ENCODE measurements at regions of chr19 and their contacts with region 1.

Region 1: DNA sequence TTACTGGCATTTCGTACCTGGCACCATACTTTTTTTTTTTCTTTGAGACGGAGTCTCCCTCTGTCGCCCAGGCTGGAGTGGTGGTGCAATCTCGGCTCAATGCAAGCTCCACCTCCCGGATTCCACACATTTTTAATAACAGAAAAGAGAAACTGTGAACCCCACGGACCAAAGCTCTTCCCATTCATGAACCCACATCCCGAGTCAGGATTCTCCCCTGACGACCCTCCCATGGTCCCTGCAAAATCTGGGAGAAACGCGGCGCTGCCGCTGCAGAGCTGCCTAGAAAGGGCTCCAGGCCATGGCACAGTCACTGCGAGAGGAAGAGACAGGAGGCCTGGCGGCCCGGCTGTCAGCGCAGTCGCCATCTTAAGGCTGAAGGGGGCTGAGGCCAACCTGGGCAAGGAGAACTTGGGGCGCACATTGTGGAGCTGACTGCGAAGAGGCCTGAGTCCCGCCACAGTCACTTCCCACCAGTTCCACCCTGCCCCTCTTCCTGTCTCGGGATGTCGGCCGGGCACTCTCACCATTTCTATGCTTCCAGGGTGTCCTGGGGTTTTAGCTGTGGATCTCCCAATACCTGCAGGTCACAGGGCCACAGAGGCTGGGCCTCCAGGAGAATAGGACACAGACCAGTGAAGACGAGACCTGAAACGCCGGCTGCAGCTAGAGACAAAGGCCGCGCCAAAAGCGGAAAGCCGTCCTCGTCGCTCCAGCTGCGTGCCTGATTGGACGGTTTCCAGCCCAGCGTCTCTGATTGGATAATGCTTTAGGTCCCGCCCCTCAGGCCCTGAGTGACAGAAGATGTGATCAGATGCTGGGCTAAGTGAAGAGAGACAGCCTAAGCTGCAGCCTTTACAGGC is 71.0 kb downstream of the ZNF486 start:
- DNase-seq: peak; percentile 78 to 97
- H3K4me3 ChIP-seq: peak overlapping the region; percentile 86 to 98 (median 92)
- H3K27ac ChIP-seq: peak overlapping the region; percentile 94
- H3K4me1 ChIP-seq: peaks cover 0 to 13% (median 4%) of the 10 kb centered on the region in 4 experiments; a peak in 6 of 7 replicates
- H3K27me3 ChIP-seq: no peaks in the 10 kb centered on the region
- CTCF ChIP-seq: no peak; a peak in 1 of 4 replicates
- EP300 ChIP-seq: no peak
- POLR2A ChIP-seq: peak; percentile 90 to 96
- RAD21 ChIP-seq: no peak

Region 2: GRCh38 chr19:20209051-20209450 is 28.9 kb before region 1 on chr19:
- CTCF ChIA-PET with region 1: no interaction called
- POLR2A ChIA-PET with region 1: interaction called, 10 read pairs
- DNase-seq: no peak
- H3K4me3 ChIP-seq: no peak overlapping the region
- H3K27ac ChIP-seq: no peak overlapping the region
- H3K4me1 ChIP-seq: no peaks in the 10 kb centered on the region
- H3K27me3 ChIP-seq: no peaks in the 10 kb centered on the region
- CTCF ChIP-seq: no peak
- EP300 ChIP-seq: no peak
- POLR2A ChIP-seq: no peak
- RAD21 ChIP-seq: no peak

Region 3: DNA sequence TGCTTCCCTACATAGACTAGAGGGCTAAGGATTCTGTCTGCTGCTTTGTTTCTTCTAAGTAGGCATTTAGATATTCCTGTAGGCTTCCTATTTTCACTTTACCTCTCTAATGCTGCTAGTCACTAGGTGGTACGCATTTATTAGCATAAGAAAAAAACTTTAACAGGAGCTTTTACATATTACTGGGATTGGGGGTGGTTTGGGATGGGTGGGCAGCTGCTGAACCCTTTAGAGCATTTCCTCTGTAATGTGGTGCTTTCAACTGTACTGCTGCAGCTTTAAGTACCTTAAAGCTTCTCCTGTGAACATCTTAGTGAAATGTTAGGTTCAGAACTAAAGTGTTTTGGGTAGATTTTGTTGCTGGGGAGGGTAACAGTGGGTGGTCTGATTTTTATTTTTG is 21.6 kb after region 1 on chr19:
- CTCF ChIA-PET with region 1: interaction called, 5 read pairs
- POLR2A ChIA-PET with region 1: interaction called, 20 read pairs
- DNase-seq: peak; percentile 46 to 72
- H3K4me3 ChIP-seq: peak overlapping the region in 1 of 4 experiments; percentile 29; a peak in 1 of 8 replicates
- H3K27ac ChIP-seq: peak overlapping the region; percentile 57; the same call in 1 of the 2 replicates
- H3K4me1 ChIP-seq: peaks cover 0 to 18% (median 13%) of the 10 kb centered on the region in 4 experiments
- H3K27me3 ChIP-seq: no peaks in the 10 kb centered on the region
- CTCF ChIP-seq: no peak
- EP300 ChIP-seq: no peak
- POLR2A ChIP-seq: no peak
- RAD21 ChIP-seq: no peak

Region 4: GRCh38 chr19:20397292-20397691 is 159.3 kb after region 1 on chr19:
- CTCF ChIA-PET with region 1: no interaction called
- POLR2A ChIA-PET with region 1: no interaction called
- DNase-seq: no peak
- H3K4me3 ChIP-seq: no peak overlapping the region; a peak in 1 of 8 replicates
- H3K27ac ChIP-seq: no peak overlapping the region
- H3K4me1 ChIP-seq: no peaks in the 10 kb centered on the region
- H3K27me3 ChIP-seq: no peaks in the 10 kb centered on the region
- CTCF ChIP-seq: no peak
- EP300 ChIP-seq: no peak
- POLR2A ChIP-seq: no peak
- RAD21 ChIP-seq: no peak